Mammary epithelial cell (primary cell): ENCODE measurements at regions of chr9 and their contacts with region 1.

Region 1: DNA sequence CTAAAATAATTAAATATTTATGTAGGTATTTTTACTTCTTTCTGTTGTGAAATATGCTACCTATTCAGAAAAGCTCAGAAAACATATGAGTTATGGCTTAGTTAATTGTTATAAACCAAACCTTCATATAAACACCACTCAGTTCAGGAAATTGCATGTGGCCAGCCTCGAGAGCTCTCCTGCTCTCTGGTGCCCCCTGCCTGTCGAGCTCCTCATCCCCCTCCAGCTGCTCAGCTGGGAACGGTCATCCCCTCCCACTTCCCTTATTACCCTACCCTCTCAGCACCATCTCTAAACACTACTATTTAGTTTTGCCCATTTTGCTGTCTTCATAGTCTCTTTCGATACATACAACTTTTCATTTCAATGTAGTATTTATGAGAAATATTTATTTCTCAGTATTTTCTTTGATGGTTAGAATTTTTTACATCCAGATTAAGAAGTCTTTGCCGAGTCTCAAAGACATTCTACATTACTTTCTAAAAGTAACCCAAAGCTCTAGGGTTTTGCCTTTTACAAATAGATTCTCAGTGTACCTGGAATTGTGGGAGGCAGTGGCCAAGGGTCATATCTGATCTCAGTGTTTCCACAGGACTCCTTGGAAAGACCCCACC is 51.2 kb upstream of the SEMA4D start:
- DNase-seq: peak; percentile 39
- H3K4me3 ChIP-seq: no peak overlapping the region
- H3K27ac ChIP-seq: no peak overlapping the region
- H3K4me1 ChIP-seq: no peaks in the 10 kb centered on the region
- H3K27me3 ChIP-seq: no peaks in the 10 kb centered on the region
- CTCF ChIP-seq: peak; percentile 91 to 95

Region 2: GRCh38 chr9:89318123-89319014 is 230.8 kb before region 1 on chr9 and contains the start of gene SECISBP2:
- CTCF ChIA-PET with region 1: no interaction called
- dilution Hi-C with region 1: no loop called
- in situ Hi-C with region 1: no loop called
- intact Hi-C with region 1: loop called (anchors 1 kb)
- DNase-seq: peak; percentile 95
- H3K4me3 ChIP-seq: peak within 1 kb of the TSS; percentile 74 to 87 (median 79)
- H3K27ac ChIP-seq: peak within 1 kb of the TSS; percentile 88
- H3K4me1 ChIP-seq: peaks cover 39% of the 10 kb centered on the region
- H3K27me3 ChIP-seq: no peaks in the 10 kb centered on the region
- CTCF ChIP-seq: peak; percentile 74 to 80
- total RNA-seq, gene SECISBP2: 24.5 to 26.5 TPM

Region 3: GRCh38 chr9:89375191-89375760 is 173.9 kb before region 1 on chr9:
- CTCF ChIA-PET with region 1: interaction called, 19 read pairs
- dilution Hi-C with region 1: no loop called
- in situ Hi-C with region 1: no loop called
- intact Hi-C with region 1: loop called (anchors 1 kb)
- DNase-seq: no peak
- H3K4me3 ChIP-seq: no peak overlapping the region
- H3K27ac ChIP-seq: no peak overlapping the region
- H3K4me1 ChIP-seq: peaks cover 3% of the 10 kb centered on the region
- H3K27me3 ChIP-seq: no peaks in the 10 kb centered on the region
- CTCF ChIP-seq: peak in 1 of 2 donors; percentile 24

Region 4: GRCh38 chr9:89410641-89411350 is 138.3 kb before region 1 on chr9:
- CTCF ChIA-PET with region 1: no interaction called
- dilution Hi-C with region 1: no loop called
- in situ Hi-C with region 1: no loop called
- intact Hi-C with region 1: loop called (anchors 1 kb)
- DNase-seq: peak; percentile 61
- H3K4me3 ChIP-seq: no peak overlapping the region
- H3K27ac ChIP-seq: no peak overlapping the region
- H3K4me1 ChIP-seq: no peaks in the 10 kb centered on the region
- H3K27me3 ChIP-seq: no peaks in the 10 kb centered on the region
- CTCF ChIP-seq: peak in 1 of 2 donors; percentile 28

Region 5: DNA sequence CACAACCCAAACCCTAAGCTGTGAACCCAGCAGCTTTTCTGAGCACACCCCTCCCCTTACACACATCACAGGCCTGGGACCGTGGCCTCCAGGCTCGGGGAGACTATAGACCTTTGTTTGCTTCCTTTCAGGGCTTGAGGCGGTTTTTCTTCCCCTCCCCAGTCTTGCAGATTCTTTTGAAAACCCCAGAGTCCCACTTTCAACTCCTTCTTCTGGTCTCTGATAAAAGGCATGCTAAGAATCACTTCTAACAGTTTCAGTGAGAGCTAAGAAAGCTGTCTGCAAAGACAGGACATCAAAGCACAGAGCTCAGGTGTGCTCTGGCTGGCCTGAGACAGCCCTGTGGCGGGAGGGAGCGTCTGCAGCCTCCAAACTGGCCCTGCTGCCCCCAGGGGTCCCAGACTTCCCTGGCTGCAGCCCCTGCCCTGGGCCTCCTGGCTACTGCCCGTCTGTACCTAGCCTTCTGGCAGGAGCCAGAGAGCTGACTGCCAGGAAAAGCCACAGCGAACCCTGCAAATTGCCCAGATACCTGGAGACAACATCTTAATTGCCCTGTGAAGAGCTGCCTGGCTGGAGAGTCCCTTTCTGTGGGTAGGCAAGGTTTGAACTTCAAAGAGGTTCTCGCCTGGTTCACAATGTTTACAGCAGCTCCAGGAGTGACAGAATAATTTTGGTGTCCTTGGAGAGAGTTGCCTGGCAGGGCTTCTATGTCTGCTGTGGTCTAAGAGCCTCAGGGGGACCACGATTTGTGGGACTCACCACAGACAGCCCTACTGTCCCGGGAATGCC is 194.6 kb after region 1 on chr9:
- CTCF ChIA-PET with region 1: no interaction called
- dilution Hi-C with region 1: no loop called
- in situ Hi-C with region 1: no loop called
- intact Hi-C with region 1: no loop called
- DNase-seq: no peak
- H3K4me3 ChIP-seq: no peak overlapping the region
- H3K27ac ChIP-seq: no peak overlapping the region
- H3K4me1 ChIP-seq: peaks cover 8% of the 10 kb centered on the region
- H3K27me3 ChIP-seq: no peaks in the 10 kb centered on the region
- CTCF ChIP-seq: no peak